Activated CD8-positive, alpha-beta T cell treated with anti-CD3 and anti-CD28 coated beads for 36 hours (primary cell): ENCODE measurements at regions of chr5 and their contacts with region 1.

Region 1: DNA sequence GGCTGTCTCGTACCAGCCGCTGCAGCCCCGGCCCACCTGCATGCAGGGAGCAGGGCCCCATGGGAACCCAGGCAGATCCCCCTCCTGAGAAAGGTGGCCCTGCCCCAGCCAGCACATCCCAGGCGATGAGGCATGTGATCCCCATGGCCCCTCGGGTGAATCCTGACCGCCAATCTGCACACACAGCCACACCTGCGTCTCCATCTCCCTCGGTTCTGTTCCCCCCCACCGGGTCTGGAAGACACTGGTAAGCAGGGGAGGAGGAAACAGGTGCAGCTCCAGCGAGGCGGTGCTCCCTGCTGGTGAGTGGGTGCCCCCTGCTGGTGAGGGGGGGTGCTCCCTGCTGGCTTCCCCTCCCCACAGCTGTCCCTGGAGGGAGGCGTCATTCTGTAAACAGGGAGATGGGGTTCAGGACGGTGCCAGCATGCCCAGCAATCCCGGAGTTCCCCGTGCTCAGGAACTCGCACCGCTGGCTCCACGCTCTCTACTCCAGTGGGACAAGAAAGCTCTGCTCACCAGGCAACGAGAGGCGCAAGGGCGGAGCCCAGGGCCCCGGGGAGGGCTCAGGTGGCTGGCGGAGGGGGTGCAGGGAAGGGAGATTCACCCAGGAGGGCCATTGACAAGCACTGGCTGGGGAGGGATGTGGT is 28.4 kb upstream of the SLC12A7 start:
- DNase-seq: peak; percentile 87
- ATAC-seq: peak; percentile 89
- H3K4me3 Mint-ChIP-seq: no peak overlapping the region
- H3K27ac Mint-ChIP-seq: no peak overlapping the region
- H3K4me1 Mint-ChIP-seq: peaks cover 3% of the 10 kb centered on the region
- H3K27me3 Mint-ChIP-seq: no peaks in the 10 kb centered on the region
- CTCF ChIP-seq: peak; percentile 78

Region 2: GRCh38 chr5:849651-850301 is 290.5 kb before region 1 on chr5:
- CTCF ChIA-PET with region 1: no interaction called
- POLR2A ChIA-PET with region 1: no interaction called
- intact Hi-C with region 1: no loop called
- DNase-seq: no peak
- ATAC-seq: no peak
- H3K4me3 Mint-ChIP-seq: no peak overlapping the region
- H3K27ac Mint-ChIP-seq: no peak overlapping the region
- H3K4me1 Mint-ChIP-seq: peaks cover 8% of the 10 kb centered on the region
- H3K27me3 Mint-ChIP-seq: peaks cover 1% of the 10 kb centered on the region
- CTCF ChIP-seq: no peak

Region 3: GRCh38 chr5:873328-873727 is 267.0 kb before region 1 on chr5:
- CTCF ChIA-PET with region 1: no interaction called
- POLR2A ChIA-PET with region 1: no interaction called
- intact Hi-C with region 1: no loop called
- DNase-seq: no peak
- ATAC-seq: no peak
- H3K4me3 Mint-ChIP-seq: no peak overlapping the region
- H3K27ac Mint-ChIP-seq: no peak overlapping the region
- H3K4me1 Mint-ChIP-seq: no peaks in the 10 kb centered on the region
- H3K27me3 Mint-ChIP-seq: no peaks in the 10 kb centered on the region
- CTCF ChIP-seq: no peak

Region 4: DNA sequence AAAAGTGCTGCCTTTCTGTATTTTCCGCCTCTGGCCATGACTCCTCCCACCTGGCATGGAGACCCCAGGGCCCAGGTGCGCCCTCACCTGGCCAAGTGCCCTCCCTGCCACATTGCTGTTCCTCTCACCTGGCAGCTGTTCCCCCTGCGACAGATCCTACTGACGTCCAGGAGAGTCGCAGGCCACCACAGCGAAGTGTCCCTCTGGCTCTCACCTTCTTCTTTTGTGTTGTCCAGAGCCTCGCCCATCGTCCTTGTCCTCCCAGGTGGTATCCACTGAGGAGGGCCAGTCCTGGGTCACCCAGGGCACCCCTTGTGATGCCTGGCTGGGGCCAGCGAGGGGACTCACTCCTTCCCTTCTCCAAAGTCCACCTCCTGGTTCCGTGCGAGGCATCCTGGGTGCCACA is 129.1 kb before region 1 on chr5:
- CTCF ChIA-PET with region 1: interaction called, 11 read pairs
- POLR2A ChIA-PET with region 1: no interaction called
- intact Hi-C with region 1: no loop called
- DNase-seq: peak; percentile 79
- ATAC-seq: peak; percentile 78
- H3K4me3 Mint-ChIP-seq: no peak overlapping the region
- H3K27ac Mint-ChIP-seq: no peak overlapping the region
- H3K4me1 Mint-ChIP-seq: peaks cover 14% of the 10 kb centered on the region
- H3K27me3 Mint-ChIP-seq: peaks cover 40% of the 10 kb centered on the region
- CTCF ChIP-seq: peak; percentile 60

Region 5: DNA sequence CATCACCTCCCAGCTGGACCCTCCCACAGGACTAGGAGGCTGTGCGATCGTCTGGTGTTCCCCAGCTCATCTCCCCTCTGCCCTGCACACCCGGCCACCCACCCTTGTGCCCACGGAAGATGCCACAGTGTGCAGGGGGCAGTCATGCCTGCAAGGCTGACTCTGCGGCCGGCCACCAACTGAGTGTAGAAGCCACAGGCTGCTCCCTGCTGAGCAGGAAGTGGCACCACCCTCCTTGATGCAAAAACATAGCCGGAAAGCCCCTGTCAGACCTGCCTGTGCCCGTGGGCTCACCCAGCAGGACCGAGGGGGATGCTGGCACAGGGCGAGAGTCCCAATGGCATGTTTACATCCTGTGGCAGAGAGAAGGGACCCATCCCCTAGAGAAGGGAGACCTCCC is 11.9 kb after region 1 on chr5:
- CTCF ChIA-PET with region 1: interaction called, 14 read pairs
- POLR2A ChIA-PET with region 1: interaction called, 7 read pairs
- intact Hi-C with region 1: no loop called
- DNase-seq: peak; percentile 58
- ATAC-seq: peak; percentile 81
- H3K4me3 Mint-ChIP-seq: no peak overlapping the region
- H3K27ac Mint-ChIP-seq: no peak overlapping the region
- H3K4me1 Mint-ChIP-seq: peaks cover 21% of the 10 kb centered on the region
- H3K27me3 Mint-ChIP-seq: peaks cover 20% of the 10 kb centered on the region
- CTCF ChIP-seq: no peak

Region 6: GRCh38 chr5:1174122-1174936 is 34.0 kb after region 1 on chr5:
- CTCF ChIA-PET with region 1: interaction called, 10 read pairs
- POLR2A ChIA-PET with region 1: no interaction called
- intact Hi-C with region 1: no loop called
- DNase-seq: peak; percentile 64
- ATAC-seq: peak; percentile 64
- H3K4me3 Mint-ChIP-seq: no peak overlapping the region
- H3K27ac Mint-ChIP-seq: no peak overlapping the region
- H3K4me1 Mint-ChIP-seq: peaks cover 5% of the 10 kb centered on the region
- H3K27me3 Mint-ChIP-seq: no peaks in the 10 kb centered on the region
- CTCF ChIP-seq: peak; percentile 74